IMR-90 (cell line): ENCODE measurements at regions of chr17 and their contacts with region 1.

Region 1: DNA sequence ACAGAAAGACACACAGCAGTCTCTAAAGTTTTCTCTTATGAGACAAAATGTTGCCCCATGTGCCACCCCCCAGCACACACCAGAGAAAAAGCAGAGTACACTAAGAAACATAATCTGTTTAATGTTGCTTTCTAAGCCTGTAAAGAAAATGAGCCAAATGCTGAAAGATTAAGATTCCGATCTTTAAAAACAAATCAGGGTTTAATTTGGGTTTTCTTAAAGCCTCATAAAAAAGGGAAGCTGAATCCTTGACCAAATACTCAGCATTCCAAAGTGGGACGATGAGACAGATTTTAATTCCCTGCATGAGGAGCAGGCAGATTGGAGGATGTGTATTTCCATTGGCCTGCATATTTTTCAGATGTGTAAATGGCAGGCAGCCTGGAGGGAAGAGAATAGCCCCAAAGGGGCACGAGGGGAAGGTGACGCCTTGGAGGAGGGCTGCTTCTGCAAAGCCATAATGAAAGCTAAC is 118.4 kb downstream of the COPRS start:
- DNase-seq: peak; percentile 91
- ATAC-seq: peak; percentile 84
- H3K4me3 ChIP-seq: no peak overlapping the region
- H3K27ac ChIP-seq: peak overlapping the region; percentile 95
- H3K4me1 ChIP-seq: peaks cover 35% of the 10 kb centered on the region
- H3K27me3 ChIP-seq: no peaks in the 10 kb centered on the region
- CTCF ChIP-seq: no peak
- POLR2A ChIP-seq: no peak
- RAD21 ChIP-seq: no peak

Region 2: DNA sequence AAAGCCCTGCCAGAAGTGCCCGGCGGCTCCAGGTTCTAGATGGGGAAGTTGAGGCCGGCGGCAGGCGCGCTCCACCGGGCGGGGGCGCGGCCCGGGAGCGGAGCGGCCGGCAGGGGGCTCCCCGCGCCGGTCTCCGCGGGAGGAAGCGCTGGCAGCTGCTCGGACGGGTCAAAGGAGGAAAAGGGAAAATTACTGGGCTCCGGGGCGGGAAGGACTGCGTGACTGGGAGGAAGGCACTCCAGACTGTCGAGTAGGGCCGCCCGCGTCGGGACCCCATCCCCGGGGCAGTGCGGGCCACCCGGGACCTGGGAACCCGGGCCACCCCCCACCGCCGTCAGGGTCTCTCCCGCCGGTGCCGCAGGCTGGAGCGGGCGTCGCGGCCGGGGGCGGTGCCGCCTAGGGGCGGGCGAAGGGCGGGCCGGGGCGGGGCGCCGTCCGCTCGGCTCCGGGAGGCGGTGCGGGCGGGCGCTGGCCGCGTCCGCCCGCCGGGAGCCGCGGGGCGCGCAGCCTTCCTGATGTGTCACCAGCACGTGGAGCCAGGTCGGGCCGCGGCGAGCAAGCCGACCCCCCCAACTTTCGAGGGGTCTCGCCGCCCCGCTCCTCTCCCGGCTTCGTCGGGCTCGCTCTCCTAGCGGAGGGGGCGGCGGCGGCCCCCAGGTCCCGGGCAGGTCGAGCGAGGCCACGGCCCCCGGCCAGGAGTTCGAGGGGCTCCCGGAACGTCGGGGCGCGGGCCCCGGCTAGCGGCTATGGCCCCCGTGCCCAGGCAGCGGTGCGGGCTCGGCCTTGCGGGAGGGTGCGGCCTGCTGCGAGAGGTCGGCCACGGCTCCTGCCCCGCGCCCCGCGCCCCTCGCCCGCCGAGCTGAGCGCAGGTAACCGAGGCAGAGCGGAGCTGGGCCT is 181.7 kb before region 1 on chr17:
- CTCF ChIA-PET with region 1: no interaction called
- POLR2A ChIA-PET with region 1: no interaction called
- dilution Hi-C with region 1: no loop called
- in situ Hi-C with region 1: no loop called
- intact Hi-C with region 1: loop called (anchors 5 kb)
- DNase-seq: peak; percentile 80
- ATAC-seq: peak; percentile 94
- H3K4me3 ChIP-seq: peak overlapping the region; percentile 70
- H3K27ac ChIP-seq: peak overlapping the region; percentile 87
- H3K4me1 ChIP-seq: peaks cover 17% of the 10 kb centered on the region
- H3K27me3 ChIP-seq: no peaks in the 10 kb centered on the region
- CTCF ChIP-seq: peak; percentile 98
- POLR2A ChIP-seq: peak; percentile 53; the same call in 1 of the 2 replicates
- RAD21 ChIP-seq: peak; percentile 90

Region 3: GRCh38 chr17:31696184-31696602 is 44.5 kb before region 1 on chr17:
- CTCF ChIA-PET with region 1: no interaction called
- POLR2A ChIA-PET with region 1: no interaction called
- dilution Hi-C with region 1: no loop called
- in situ Hi-C with region 1: no loop called
- intact Hi-C with region 1: loop called (anchors 1 kb)
- DNase-seq: peak; percentile 88
- ATAC-seq: peak; percentile 92
- H3K4me3 ChIP-seq: no peak overlapping the region
- H3K27ac ChIP-seq: peak overlapping the region; percentile 62
- H3K4me1 ChIP-seq: peaks cover 18% of the 10 kb centered on the region
- H3K27me3 ChIP-seq: no peaks in the 10 kb centered on the region
- CTCF ChIP-seq: no peak; the same call in 1 of the 2 replicates
- POLR2A ChIP-seq: no peak
- RAD21 ChIP-seq: peak; percentile 36

Region 4: DNA sequence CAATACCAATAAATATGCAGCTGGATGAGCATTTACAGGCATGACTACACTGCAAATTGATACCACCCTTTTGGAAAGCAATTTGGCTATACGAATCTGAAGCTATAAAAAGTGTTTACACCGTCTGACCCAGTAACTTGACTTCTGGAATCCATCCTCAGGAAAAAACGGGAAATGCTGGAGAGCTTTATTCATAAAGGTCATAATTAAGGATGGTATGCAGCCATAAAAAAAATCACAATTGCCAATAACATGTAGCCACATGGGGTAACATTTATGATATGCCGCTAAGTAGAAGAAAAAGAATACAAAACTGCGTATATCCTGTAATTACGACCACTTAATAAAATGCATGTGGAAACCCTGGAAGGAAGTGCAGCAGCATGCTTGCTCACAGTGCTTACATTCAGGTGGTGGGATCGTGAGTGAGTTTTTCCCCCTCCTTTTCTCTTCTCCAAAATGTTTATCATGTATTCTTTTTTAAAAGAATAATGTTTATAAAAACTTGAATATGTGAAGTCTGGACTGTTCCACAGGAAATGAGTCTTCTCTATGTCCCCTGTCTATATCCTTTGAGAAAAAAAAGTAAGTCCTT is 84.2 kb after region 1 on chr17:
- CTCF ChIA-PET with region 1: no interaction called
- POLR2A ChIA-PET with region 1: no interaction called
- dilution Hi-C with region 1: no loop called
- in situ Hi-C with region 1: no loop called
- intact Hi-C with region 1: loop called (anchors 5 kb)
- DNase-seq: peak; percentile 39
- ATAC-seq: no peak; the same call in 1 of the 2 replicates
- H3K4me3 ChIP-seq: no peak overlapping the region
- H3K27ac ChIP-seq: no peak overlapping the region
- H3K4me1 ChIP-seq: peaks cover 2% of the 10 kb centered on the region
- H3K27me3 ChIP-seq: no peaks in the 10 kb centered on the region
- CTCF ChIP-seq: no peak
- POLR2A ChIP-seq: no peak
- RAD21 ChIP-seq: no peak